ENCODE measurements at regions of chr7 and their contacts with region 1.

Region 1: DNA sequence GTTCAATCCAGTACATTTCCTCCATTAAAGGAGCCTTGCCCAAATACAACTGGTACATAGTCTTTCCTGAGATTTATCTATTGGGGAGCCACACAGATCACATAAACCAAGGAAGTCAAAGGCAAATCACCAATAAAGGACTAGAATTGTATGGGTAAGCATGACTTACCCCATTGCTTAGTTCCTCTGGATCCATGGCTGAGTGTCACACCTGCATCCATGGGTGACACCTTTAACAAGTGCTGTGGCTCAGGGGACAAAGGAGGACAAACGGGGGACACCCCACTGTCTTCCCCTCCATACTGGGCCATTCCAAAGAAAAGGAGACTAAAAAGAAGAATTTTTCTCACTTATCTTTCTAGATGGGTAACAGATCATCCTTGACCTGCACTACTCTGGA is 30.4 kb downstream of the ZNF92 start:
- DNase-seq: no peak
- ATAC-seq: no peak
- H3K4me3 ChIP-seq: no peak overlapping the region
- H3K4me3 Mint-ChIP-seq: no peak overlapping the region
- H3K27ac ChIP-seq: no peak overlapping the region
- H3K27ac Mint-ChIP-seq: no peak overlapping the region
- H3K4me1 ChIP-seq: no peaks in the 10 kb centered on the region
- H3K4me1 Mint-ChIP-seq: no peaks in the 10 kb centered on the region
- H3K27me3 ChIP-seq: no peaks in the 10 kb centered on the region
- H3K27me3 Mint-ChIP-seq: no peaks in the 10 kb centered on the region
- CTCF ChIP-seq: no peak

Region 2: GRCh38 chr7:65310761-65311160 is 93.3 kb before region 1 on chr7:
- intact Hi-C with region 1: no loop called
- DNase-seq: no peak
- ATAC-seq: no peak
- H3K4me3 ChIP-seq: no peak overlapping the region
- H3K4me3 Mint-ChIP-seq: no peak overlapping the region
- H3K27ac ChIP-seq: no peak overlapping the region
- H3K27ac Mint-ChIP-seq: no peak overlapping the region
- H3K4me1 ChIP-seq: peaks cover 3% of the 10 kb centered on the region
- H3K4me1 Mint-ChIP-seq: no peaks in the 10 kb centered on the region
- H3K27me3 ChIP-seq: no peaks in the 10 kb centered on the region
- H3K27me3 Mint-ChIP-seq: peaks cover 5 to 8% of the 10 kb centered on the region in 2 donors
- CTCF ChIP-seq: no peak

Region 3: DNA sequence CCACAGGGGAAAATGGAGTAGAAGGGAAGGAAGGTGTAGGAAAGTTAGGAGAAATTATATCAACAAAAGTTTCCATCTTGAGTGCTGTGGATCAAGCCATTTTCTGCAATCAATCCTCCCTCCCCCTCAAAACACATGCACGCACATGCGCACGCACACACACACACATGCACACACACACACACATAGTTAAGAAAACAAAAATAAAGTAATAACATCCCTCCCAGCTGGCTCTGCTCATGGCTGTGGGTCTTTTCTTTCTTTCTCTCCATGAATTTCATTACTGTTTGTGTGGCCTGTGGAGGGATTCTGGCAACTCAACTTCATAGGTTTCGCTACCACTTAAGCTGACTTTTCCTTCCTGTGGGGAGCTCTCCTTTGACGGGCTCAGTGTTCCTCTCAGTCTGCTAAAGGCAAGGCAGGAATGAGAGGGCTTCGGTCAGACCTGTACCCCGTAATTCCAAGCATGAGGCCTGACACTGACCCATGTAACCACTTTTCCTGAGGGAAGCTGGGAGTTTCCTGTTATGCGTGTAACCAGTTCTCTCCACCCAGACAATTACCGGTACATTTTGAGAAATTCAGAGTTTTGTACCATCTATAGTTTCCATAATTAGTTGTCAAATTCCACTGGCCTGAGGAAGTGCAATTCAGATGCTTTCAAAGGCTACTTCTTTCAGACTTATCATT is 49.5 kb after region 1 on chr7:
- intact Hi-C with region 1: loop called (anchors 10 kb)
- DNase-seq: no peak
- ATAC-seq: no peak
- H3K4me3 ChIP-seq: no peak overlapping the region
- H3K4me3 Mint-ChIP-seq: no peak overlapping the region
- H3K27ac ChIP-seq: no peak overlapping the region
- H3K27ac Mint-ChIP-seq: no peak overlapping the region
- H3K4me1 ChIP-seq: no peaks in the 10 kb centered on the region
- H3K4me1 Mint-ChIP-seq: peaks cover 24 to 30% of the 10 kb centered on the region in 2 donors
- H3K27me3 ChIP-seq: no peaks in the 10 kb centered on the region
- H3K27me3 Mint-ChIP-seq: peaks cover 0 to 6% of the 10 kb centered on the region in 2 donors
- CTCF ChIP-seq: no peak

Measured in natural killer cell (primary cell).